T-cell (primary cell): ENCODE measurements at regions of chr14 and their contacts with region 1.

Region 1: DNA sequence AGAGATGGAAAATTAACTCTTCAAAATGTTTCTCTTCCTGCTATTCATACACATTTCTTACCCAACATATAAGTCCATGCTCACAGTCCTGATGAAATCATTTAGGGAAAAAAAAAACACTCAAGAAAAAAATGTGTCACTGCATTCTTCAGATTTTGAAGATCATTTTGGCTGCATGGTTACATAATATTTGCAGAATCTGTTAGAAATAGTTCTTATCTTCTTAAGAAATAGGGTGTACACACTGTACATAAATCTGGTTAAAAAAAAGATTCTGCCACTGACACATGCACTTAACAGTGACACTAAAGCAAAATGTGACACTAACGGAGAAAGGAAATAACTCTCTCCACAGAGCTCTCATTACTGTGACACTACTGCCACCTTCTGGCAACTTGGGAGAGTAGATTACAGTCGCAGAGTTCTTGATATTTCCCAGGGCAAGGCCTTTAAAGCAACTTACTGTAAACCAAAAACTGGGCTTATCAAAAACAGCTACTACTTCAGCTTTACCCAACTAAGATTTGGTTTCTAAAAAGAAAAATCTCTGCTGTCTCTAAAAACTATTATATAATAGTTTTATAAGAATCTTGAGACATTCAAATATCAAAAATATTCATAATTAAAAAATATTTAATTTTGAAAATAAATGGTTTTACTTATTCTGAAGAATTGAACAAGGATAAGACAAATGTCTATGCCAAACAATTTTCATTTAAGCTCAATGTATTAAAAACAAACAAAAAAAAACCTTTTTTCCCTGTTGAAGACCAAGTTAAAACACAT is 65.0 kb downstream of the SETD3 start:
- DNase-seq: peak in 33 of 35 experiments; percentile 20 to 92 (median 60)
- ATAC-seq: peak; percentile 89 to 95 (median 92)
- H3K4me3 ChIP-seq: no peak overlapping the region
- H3K4me3 Mint-ChIP-seq: no peak overlapping the region
- H3K27ac ChIP-seq: no peak overlapping the region
- H3K27ac Mint-ChIP-seq: peak overlapping the region in 1 of 2 donors; percentile 4
- H3K4me1 ChIP-seq: no peaks in the 10 kb centered on the region
- H3K4me1 Mint-ChIP-seq: peaks cover 6 to 17% (median 10%) of the 10 kb centered on the region in 3 donors
- H3K27me3 ChIP-seq: peaks cover 0 to 2% of the 10 kb centered on the region in 2 experiments
- H3K27me3 Mint-ChIP-seq: no peaks in the 10 kb centered on the region

Region 2: GRCh38 chr14:99320105-99320572 is 95.5 kb before region 1 on chr14:
- CTCF ChIA-PET with region 1: interaction called in 1 of 2 experiments, 27 read pairs
- POLR2A ChIA-PET with region 1: no interaction called
- DNase-seq: peak; percentile 33 to 87 (median 64)
- ATAC-seq: peak; percentile 41 to 92 (median 60)
- H3K4me3 ChIP-seq: peak overlapping the region in 1 of 2 donors; percentile 9
- H3K4me3 Mint-ChIP-seq: no peak overlapping the region
- H3K27ac ChIP-seq: no peak overlapping the region
- H3K27ac Mint-ChIP-seq: no peak overlapping the region
- H3K4me1 ChIP-seq: peaks cover 0 to 25% of the 10 kb centered on the region in 2 experiments
- H3K4me1 Mint-ChIP-seq: peaks cover 3 to 16% (median 9%) of the 10 kb centered on the region in 3 donors
- H3K27me3 ChIP-seq: peaks cover 0 to 26% of the 10 kb centered on the region in 2 experiments
- H3K27me3 Mint-ChIP-seq: peaks cover 0 to under 1% of the 10 kb centered on the region in 2 donors

Region 3: GRCh38 chr14:99360774-99361595 is 54.7 kb before region 1 on chr14:
- CTCF ChIA-PET with region 1: no interaction called
- POLR2A ChIA-PET with region 1: no interaction called
- DNase-seq: no peak
- ATAC-seq: no peak
- H3K4me3 ChIP-seq: no peak overlapping the region
- H3K4me3 Mint-ChIP-seq: no peak overlapping the region
- H3K27ac ChIP-seq: no peak overlapping the region
- H3K27ac Mint-ChIP-seq: no peak overlapping the region
- H3K4me1 ChIP-seq: no peaks in the 10 kb centered on the region
- H3K4me1 Mint-ChIP-seq: no peaks in the 10 kb centered on the region
- H3K27me3 ChIP-seq: peaks cover 0 to 14% of the 10 kb centered on the region in 2 experiments
- H3K27me3 Mint-ChIP-seq: no peaks in the 10 kb centered on the region

Region 4: GRCh38 chr14:99374964-99375363 is 40.7 kb before region 1 on chr14:
- CTCF ChIA-PET with region 1: no interaction called
- POLR2A ChIA-PET with region 1: no interaction called
- DNase-seq: no peak
- ATAC-seq: no peak
- H3K4me3 ChIP-seq: no peak overlapping the region
- H3K4me3 Mint-ChIP-seq: no peak overlapping the region
- H3K27ac ChIP-seq: no peak overlapping the region
- H3K27ac Mint-ChIP-seq: no peak overlapping the region
- H3K4me1 ChIP-seq: peaks cover 0 to 2% of the 10 kb centered on the region in 2 experiments
- H3K4me1 Mint-ChIP-seq: no peaks in the 10 kb centered on the region
- H3K27me3 ChIP-seq: peaks cover 0 to 26% of the 10 kb centered on the region in 2 experiments
- H3K27me3 Mint-ChIP-seq: peaks cover 29 to 35% of the 10 kb centered on the region in 2 donors

Region 5: GRCh38 chr14:99393047-99393655 is 22.5 kb before region 1 on chr14:
- CTCF ChIA-PET with region 1: interaction called, 5 to 16 read pairs
- POLR2A ChIA-PET with region 1: interaction called in 1 of 2 experiments, 4 read pairs
- DNase-seq: peak in 12 of 35 experiments; percentile 5 to 51 (median 14)
- ATAC-seq: peak in 2 of 4 experiments; percentile 29 to 44
- H3K4me3 ChIP-seq: no peak overlapping the region
- H3K4me3 Mint-ChIP-seq: no peak overlapping the region
- H3K27ac ChIP-seq: no peak overlapping the region
- H3K27ac Mint-ChIP-seq: no peak overlapping the region
- H3K4me1 ChIP-seq: peaks cover 0 to 11% of the 10 kb centered on the region in 2 experiments
- H3K4me1 Mint-ChIP-seq: peaks cover 0 to 24% (median 15%) of the 10 kb centered on the region in 3 donors
- H3K27me3 ChIP-seq: no peaks in the 10 kb centered on the region
- H3K27me3 Mint-ChIP-seq: no peaks in the 10 kb centered on the region